Ovary (tissue), 10 donors: ENCODE measurements at regions of chr11 and their contacts with region 1.

Region 1: DNA sequence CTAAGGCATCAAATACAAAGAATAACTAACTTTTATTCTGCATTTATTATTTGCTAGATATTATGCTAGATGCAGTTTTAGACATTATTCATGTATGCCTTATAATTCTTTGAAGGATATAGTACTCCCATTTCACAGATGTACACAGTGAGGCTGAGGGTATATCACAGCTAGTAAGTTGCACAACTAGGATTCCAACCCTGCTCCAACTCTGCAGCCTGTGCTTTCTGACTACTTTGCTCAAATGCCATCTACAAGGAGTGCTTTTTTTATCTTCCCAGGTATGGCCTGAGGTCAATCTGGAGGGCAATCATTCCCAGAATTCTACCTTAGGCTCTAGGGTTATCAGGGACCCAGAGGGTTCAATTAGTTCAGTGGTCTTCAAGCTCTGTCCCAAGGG is 28.4 kb downstream of the NUP160 start:
- DNase-seq: no peak
- H3K4me3 ChIP-seq: no peak overlapping the region
- H3K27ac ChIP-seq: no peak overlapping the region
- H3K4me1 ChIP-seq: no peaks in the 10 kb centered on the region
- H3K27me3 ChIP-seq: no peaks in the 10 kb centered on the region
- CTCF ChIP-seq: no peak
- EP300 ChIP-seq: no peak
- POLR2A ChIP-seq: no peak

Region 2: GRCh38 chr11:47886096-47886495 is 66.4 kb after region 1 on chr11:
- intact Hi-C with region 1: loop called in 1 of 4 experiments (anchors 10 kb)
- DNase-seq: peak in 1 of 5 donors; percentile 29
- H3K4me3 ChIP-seq: no peak overlapping the region
- H3K27ac ChIP-seq: no peak overlapping the region
- H3K4me1 ChIP-seq: peaks cover under 1% of the 10 kb centered on the region
- H3K27me3 ChIP-seq: no peaks in the 10 kb centered on the region
- CTCF ChIP-seq: no peak
- EP300 ChIP-seq: no peak
- POLR2A ChIP-seq: no peak